ENCODE measurements at regions of chr20 and their contacts with region 1.

Region 1: DNA sequence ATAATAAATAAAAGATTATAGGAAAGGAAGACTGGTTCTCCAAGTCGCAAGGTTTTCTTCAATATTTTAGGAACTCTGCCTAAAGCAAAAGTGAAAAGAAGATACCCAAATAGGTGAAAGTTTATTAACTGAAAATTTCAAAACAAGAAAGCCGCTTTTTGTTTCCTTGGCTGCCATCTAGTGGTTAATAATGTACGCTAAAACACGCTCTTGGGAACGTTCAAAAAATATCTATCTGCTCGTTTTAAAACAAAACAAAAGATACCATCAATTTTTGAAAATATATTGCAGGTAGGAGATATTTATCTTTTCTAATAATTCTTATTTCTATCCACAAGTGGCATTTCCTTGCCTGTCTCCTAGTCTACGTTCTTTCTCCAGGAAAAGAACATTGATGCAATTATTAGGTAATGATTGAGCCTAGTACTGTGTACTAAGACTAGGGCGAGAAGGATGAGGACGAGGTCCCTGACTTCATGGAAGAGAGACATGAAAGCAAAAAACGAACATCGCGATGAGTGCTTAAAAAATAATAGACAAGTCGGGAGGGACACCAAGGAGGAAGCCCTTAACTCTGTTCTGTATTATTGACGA is 97.2 kb downstream of the SPTLC3 start:
- DNase-seq: no peak
- H3K4me3 ChIP-seq: no peak overlapping the region
- CTCF ChIP-seq: no peak
- POLR2A ChIP-seq: no peak

Region 2: GRCh38 chr20:12970372-12970821 is 135.6 kb before region 1 on chr20:
- intact Hi-C with region 1: loop called (anchors 5 kb)
- DNase-seq: no peak
- H3K4me3 ChIP-seq: no peak overlapping the region
- CTCF ChIP-seq: no peak
- POLR2A ChIP-seq: no peak

Measured in lower leg skin (tissue), 4 donors.